Naive thymus-derived CD4-positive, alpha-beta T cell (primary cell): ENCODE measurements at regions of chr15 and their contacts with region 1.

Region 1: GRCh38 chr15:41594801-41595746 is 36.1 kb downstream of the TYRO3 start:
- DNase-seq: no peak
- ATAC-seq: no peak
- H3K4me3 ChIP-seq: no peak overlapping the region
- H3K4me3 Mint-ChIP-seq: no peak overlapping the region
- H3K27ac ChIP-seq: no peak overlapping the region
- H3K27ac Mint-ChIP-seq: no peak overlapping the region
- H3K4me1 ChIP-seq: no peaks in the 10 kb centered on the region
- H3K4me1 Mint-ChIP-seq: no peaks in the 10 kb centered on the region
- H3K27me3 ChIP-seq: no peaks in the 10 kb centered on the region
- H3K27me3 Mint-ChIP-seq: peaks cover 0 to 40% (median 5%) of the 10 kb centered on the region in 5 donors

Region 2: DNA sequence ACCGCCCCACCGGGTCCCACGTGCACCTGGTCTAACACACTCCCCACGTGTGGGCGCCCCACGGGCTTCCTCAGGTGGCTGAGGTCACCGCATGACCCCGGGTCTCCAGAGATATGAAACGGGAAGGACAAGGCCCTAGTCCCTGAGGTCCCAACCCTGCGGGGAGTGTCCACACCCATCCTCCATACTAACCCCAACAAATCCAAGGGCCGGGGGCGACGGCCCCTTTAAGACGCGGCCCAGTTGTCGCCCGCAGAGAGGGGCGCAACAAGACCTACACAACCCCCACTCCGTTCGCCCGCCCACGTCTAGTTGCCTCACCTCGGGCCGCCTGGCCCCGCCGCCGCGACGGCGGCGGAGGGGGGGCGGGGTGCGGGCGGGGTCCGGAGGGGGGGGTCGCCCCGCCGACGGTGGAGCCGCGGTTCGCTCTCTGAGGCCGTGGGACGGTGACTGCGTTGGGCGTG is 479.4 kb before region 1 on chr15:
- CTCF ChIA-PET with region 1: no interaction called
- POLR2A ChIA-PET with region 1: no interaction called
- intact Hi-C with region 1: no loop called
- DNase-seq: peak; percentile 43 to 77 (median 65)
- ATAC-seq: peak; percentile 66
- H3K4me3 ChIP-seq: peak overlapping the region; percentile 85
- H3K4me3 Mint-ChIP-seq: peak overlapping the region; percentile 89 to 99 (median 95)
- H3K27ac ChIP-seq: peak overlapping the region; percentile 80
- H3K27ac Mint-ChIP-seq: peak overlapping the region; percentile 98 to 100 (median 99)
- H3K4me1 ChIP-seq: peaks cover 14 to 16% of the 10 kb centered on the region in 2 donors
- H3K4me1 Mint-ChIP-seq: peaks cover 5 to 40% (median 30%) of the 10 kb centered on the region in 7 donors
- H3K27me3 ChIP-seq: no peaks in the 10 kb centered on the region
- H3K27me3 Mint-ChIP-seq: peaks cover 0 to 4% (median 0%) of the 10 kb centered on the region in 5 donors

Region 3: GRCh38 chr15:41650806-41651205 is 55.7 kb after region 1 on chr15:
- CTCF ChIA-PET with region 1: no interaction called
- POLR2A ChIA-PET with region 1: no interaction called
- intact Hi-C with region 1: loop called in 1 of 2 experiments (anchors 2 kb)
- DNase-seq: no peak
- ATAC-seq: no peak
- H3K4me3 ChIP-seq: no peak overlapping the region
- H3K4me3 Mint-ChIP-seq: no peak overlapping the region
- H3K27ac ChIP-seq: no peak overlapping the region
- H3K27ac Mint-ChIP-seq: no peak overlapping the region
- H3K4me1 ChIP-seq: no peaks in the 10 kb centered on the region
- H3K4me1 Mint-ChIP-seq: peaks cover 0 to 7% (median 5%) of the 10 kb centered on the region in 7 donors
- H3K27me3 ChIP-seq: no peaks in the 10 kb centered on the region
- H3K27me3 Mint-ChIP-seq: peaks cover 0 to 25% (median 0%) of the 10 kb centered on the region in 5 donors